Mammary epithelial cell (primary cell): ENCODE measurements at regions of chr5 and their contacts with region 1.

Region 1: GRCh38 chr5:174951146-174951780 is 226.9 kb downstream of the MSX2 start:
- DNase-seq: peak; percentile 52
- H3K4me3 ChIP-seq: no peak overlapping the region
- H3K27ac ChIP-seq: no peak overlapping the region
- H3K4me1 ChIP-seq: no peaks in the 10 kb centered on the region
- H3K27me3 ChIP-seq: no peaks in the 10 kb centered on the region
- CTCF ChIP-seq: peak; percentile 81 to 91

Region 2: GRCh38 chr5:175070283-175070682 is 119.0 kb after region 1 on chr5:
- CTCF ChIA-PET with region 1: no interaction called
- dilution Hi-C with region 1: no loop called
- in situ Hi-C with region 1: no loop called
- intact Hi-C with region 1: no loop called
- DNase-seq: no peak
- H3K4me3 ChIP-seq: no peak overlapping the region
- H3K27ac ChIP-seq: no peak overlapping the region
- H3K4me1 ChIP-seq: no peaks in the 10 kb centered on the region
- H3K27me3 ChIP-seq: no peaks in the 10 kb centered on the region
- CTCF ChIP-seq: no peak

Region 3: GRCh38 chr5:175444060-175444904 is 493.0 kb after region 1 on chr5 and contains the start of gene DRD1:
- CTCF ChIA-PET with region 1: no interaction called
- dilution Hi-C with region 1: no loop called
- in situ Hi-C with region 1: loop called in 1 of 2 experiments (anchors 25 kb)
- intact Hi-C with region 1: loop called (anchors 1 kb)
- DNase-seq: peak; percentile 25
- H3K4me3 ChIP-seq: no peak within 1 kb of the TSS
- H3K27ac ChIP-seq: no peak within 1 kb of the TSS
- H3K4me1 ChIP-seq: peaks cover 8% of the 10 kb centered on the region
- H3K27me3 ChIP-seq: peaks cover 15% of the 10 kb centered on the region
- CTCF ChIP-seq: peak; percentile 21 to 57
- total RNA-seq, gene DRD1: not detected

Region 4: GRCh38 chr5:175464074-175464941 is 513.0 kb after region 1 on chr5:
- CTCF ChIA-PET with region 1: interaction called, 4 read pairs
- dilution Hi-C with region 1: no loop called
- in situ Hi-C with region 1: no loop called
- intact Hi-C with region 1: loop called (anchors 1 kb)
- DNase-seq: peak; percentile 40
- H3K4me3 ChIP-seq: no peak overlapping the region
- H3K27ac ChIP-seq: no peak overlapping the region
- H3K4me1 ChIP-seq: peaks cover 12% of the 10 kb centered on the region
- H3K27me3 ChIP-seq: no peaks in the 10 kb centered on the region
- CTCF ChIP-seq: peak; percentile 48 to 70

Region 5: GRCh38 chr5:175718401-175719108 is 767.3 kb after region 1 on chr5:
- CTCF ChIA-PET with region 1: no interaction called
- dilution Hi-C with region 1: no loop called
- in situ Hi-C with region 1: no loop called
- intact Hi-C with region 1: loop called (anchors 2 kb)
- DNase-seq: peak; percentile 41
- H3K4me3 ChIP-seq: no peak overlapping the region
- H3K27ac ChIP-seq: no peak overlapping the region
- H3K4me1 ChIP-seq: no peaks in the 10 kb centered on the region
- H3K27me3 ChIP-seq: peaks cover 2% of the 10 kb centered on the region
- CTCF ChIP-seq: peak; percentile 44 to 73